ENCODE measurements at regions of chr11 and their contacts with region 1.

Region 1: GRCh38 chr11:57456960-57457642 is 3.2 kb upstream of the RTN4RL2 start:
- DNase-seq: peak; percentile 73 to 84
- ATAC-seq: peak; percentile 82 to 87
- H3K4me3 ChIP-seq: peak overlapping the region in 1 of 4 donors; percentile 30
- H3K27ac ChIP-seq: no peak overlapping the region
- H3K4me1 ChIP-seq: peaks cover 21 to 30% of the 10 kb centered on the region in 2 donors
- H3K27me3 ChIP-seq: peaks cover 22 to 41% (median 33%) of the 10 kb centered on the region in 3 donors
- CTCF ChIP-seq: peak; percentile 94 to 100 (median 96)
- POLR2A ChIP-seq: no peak

Region 2: GRCh38 chr11:57480409-57481137 is 23.5 kb after region 1 on chr11:
- in situ Hi-C with region 1: no loop called
- intact Hi-C with region 1: loop called (anchors 1 kb)
- DNase-seq: peak in 1 of 2 donors; percentile 43
- ATAC-seq: peak in 1 of 2 donors; percentile 34
- H3K4me3 ChIP-seq: no peak overlapping the region
- H3K27ac ChIP-seq: no peak overlapping the region
- H3K4me1 ChIP-seq: peaks cover 14 to 20% of the 10 kb centered on the region in 2 donors
- H3K27me3 ChIP-seq: peaks cover 6 to 9% (median 6%) of the 10 kb centered on the region in 3 donors
- CTCF ChIP-seq: peak in 4 of 5 experiments; percentile 41 to 78 (median 64)
- POLR2A ChIP-seq: no peak

Region 3: DNA sequence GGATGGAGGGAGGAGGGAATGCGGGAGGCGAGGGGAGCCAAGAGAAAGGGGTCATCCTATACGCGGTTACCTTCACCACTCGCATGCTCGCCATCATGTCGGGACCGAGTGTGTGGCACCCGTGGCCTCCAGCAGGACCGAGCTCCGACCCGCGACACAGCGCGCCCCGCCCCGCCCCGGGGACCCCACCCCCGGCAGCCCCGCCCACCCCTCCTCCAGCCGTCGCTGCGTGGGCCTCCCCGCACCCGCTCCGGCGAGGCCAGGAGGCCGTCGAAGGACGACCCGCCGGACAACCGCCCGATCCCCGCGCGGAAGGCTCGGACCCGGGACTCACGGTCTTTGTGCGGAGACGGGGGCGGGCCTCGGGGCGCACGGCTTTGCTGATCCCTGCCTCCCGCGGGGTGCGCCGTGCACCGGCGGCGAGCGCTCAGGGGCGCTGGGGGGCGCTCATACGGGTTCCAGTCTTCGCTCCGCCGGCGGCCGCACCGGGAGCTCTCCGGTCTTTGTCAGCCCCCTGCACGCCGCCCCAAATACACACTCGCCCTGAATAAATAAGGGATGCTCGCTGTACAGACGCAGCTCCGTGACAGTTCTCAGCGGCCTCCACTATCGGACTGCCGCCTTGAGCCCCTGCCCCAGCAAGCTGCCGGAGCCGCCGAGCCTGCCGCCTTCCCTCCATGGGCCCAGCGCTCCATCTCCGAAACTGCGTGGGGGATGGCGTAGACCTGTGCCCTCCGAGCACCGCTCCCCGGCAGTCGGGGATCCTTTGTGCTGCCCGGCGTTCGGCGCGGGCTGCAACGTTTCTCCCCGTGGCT is 110.6 kb after region 1 on chr11 and contains the start of gene UBE2L6:
- in situ Hi-C with region 1: no loop called
- intact Hi-C with region 1: loop called (anchors 5 kb)
- DNase-seq: peak in 1 of 2 donors; percentile 14
- ATAC-seq: peak; percentile 69 to 71
- H3K4me3 ChIP-seq: peak within 1 kb of the TSS; percentile 81 to 99 (median 88)
- H3K27ac ChIP-seq: peak within 1 kb of the TSS; percentile 74 to 79 (median 78)
- H3K4me1 ChIP-seq: peaks cover 13 to 32% of the 10 kb centered on the region in 2 donors
- H3K27me3 ChIP-seq: no peaks in the 10 kb centered on the region
- CTCF ChIP-seq: peak in 2 of 5 experiments; percentile 72 to 78
- POLR2A ChIP-seq: no peak
- total RNA-seq, gene UBE2L6: 5.5 to 9.0 (median 6.7) TPM

Region 4: DNA sequence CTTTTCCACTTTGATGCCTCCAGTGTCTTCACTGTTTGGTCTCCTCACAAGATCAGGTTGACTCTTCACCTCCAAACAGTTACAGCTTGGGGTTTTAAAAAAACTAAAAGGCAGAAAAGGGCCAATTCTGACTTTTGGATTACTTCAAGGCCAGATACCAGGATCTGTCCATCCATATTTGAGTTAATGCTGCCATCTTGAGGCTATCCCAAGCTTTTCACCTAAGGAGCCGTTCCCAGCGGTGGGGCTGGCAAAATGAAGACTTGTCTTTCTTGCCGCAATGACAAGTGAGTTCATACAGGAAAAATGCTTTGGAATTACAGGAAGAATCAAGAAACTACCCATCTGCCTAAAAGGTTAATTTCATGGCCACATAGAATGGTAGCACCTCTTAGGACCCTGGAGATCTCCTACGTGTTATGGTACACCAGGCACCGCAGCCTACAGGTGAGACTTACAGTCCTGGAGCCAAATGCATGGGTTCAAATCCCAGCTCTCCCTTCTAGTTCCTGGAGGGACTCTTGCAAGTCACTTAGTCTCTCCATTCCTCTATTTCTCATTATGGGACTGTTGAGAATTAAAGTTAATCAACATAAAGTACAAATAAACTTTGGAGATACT is 1056.8 kb after region 1 on chr11:
- in situ Hi-C with region 1: loop called in 1 of 4 experiments (anchors 25 kb)
- intact Hi-C with region 1: loop called (anchors 10 kb)
- DNase-seq: no peak
- ATAC-seq: peak; percentile 75 to 82
- H3K4me3 ChIP-seq: no peak overlapping the region
- H3K27ac ChIP-seq: no peak overlapping the region
- H3K4me1 ChIP-seq: no peaks in the 10 kb centered on the region
- H3K27me3 ChIP-seq: no peaks in the 10 kb centered on the region
- CTCF ChIP-seq: peak; percentile 44 to 64 (median 59)
- POLR2A ChIP-seq: no peak

Measured in gastrocnemius medialis (tissue), 4 donors.